Adrenal gland (tissue), 19 donors: ENCODE measurements at regions of chr9 and their contacts with region 1.

Region 1: DNA sequence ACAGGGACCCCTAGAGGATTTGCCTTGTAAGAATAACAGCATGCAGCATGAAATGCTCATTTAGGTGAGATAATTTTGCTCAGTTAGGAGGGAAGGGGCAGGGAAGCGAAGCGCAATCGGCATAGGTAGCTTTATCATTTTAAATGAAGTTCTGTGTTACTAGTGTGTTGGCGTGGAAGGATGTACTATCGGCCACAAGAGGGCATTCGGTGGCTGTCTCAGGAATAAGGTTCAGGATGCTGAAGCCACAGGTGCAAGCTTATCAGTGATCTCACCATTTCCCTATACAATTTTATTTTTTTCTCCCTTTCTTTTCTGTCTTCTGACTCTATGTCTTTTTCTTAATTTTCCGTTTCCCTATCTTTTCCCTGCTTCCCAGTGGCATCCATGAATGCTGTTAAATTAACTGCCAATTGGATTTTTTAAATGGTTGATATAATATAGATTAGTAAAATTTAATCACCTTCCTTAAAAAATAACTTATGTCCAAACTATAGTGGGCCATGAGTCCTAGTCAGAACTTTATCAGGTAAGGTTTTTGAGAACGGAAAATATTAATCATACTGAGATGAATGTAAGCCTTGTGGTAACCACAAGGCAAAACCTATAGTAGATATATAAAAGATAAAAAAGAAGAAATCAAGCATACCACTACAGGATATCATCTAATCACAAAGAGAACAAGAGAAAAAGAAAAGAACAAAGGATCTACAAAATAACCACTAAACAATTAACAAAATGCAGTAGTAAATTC is 1.2 kb upstream of the INSL6 start:
- DNase-seq: peak; percentile 26 to 75 (median 48)
- H3K4me3 ChIP-seq: no peak overlapping the region
- H3K27ac ChIP-seq: no peak overlapping the region
- H3K4me1 ChIP-seq: no peaks in the 10 kb centered on the region
- H3K27me3 ChIP-seq: no peaks in the 10 kb centered on the region
- CTCF ChIP-seq: peak; percentile 40 to 73 (median 66)
- POLR2A ChIP-seq: no peak

Region 2: DNA sequence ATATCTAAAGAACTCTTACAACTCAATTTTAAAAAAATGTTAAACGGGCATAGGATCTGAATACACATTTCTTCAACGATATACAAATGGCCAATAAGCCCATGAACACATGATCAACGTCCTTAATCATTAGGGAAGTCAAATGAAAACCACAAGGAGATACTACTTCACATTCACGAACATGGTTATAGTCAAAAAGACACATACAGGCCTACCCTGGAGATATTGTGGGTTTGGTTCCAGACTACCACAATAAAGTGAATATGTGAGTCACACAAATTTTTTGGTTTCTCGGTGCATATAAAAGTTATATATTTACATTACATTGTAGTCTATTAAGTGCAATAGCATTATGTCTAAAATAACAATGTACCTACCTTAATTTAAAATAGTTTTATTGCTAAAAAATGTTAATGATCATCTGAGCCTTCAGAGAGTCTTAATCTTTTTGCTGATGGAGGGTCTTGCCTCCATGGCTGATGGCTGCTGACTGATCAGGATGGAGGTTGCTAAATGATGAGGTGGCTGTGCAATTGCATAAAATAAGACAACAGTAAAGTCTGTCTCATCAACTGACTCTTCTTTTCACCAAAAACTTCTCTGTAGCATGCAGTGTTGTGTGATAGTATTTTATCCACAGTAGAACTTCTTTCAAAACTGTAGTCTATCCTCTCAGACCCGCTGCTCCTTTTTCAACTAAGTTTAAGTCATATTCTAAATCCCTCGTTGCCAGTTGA is 460.7 kb before region 1 on chr9:
- intact Hi-C with region 1: no loop called
- DNase-seq: no peak
- H3K4me3 ChIP-seq: no peak overlapping the region
- H3K27ac ChIP-seq: no peak overlapping the region
- H3K4me1 ChIP-seq: peaks cover 0 to 17% of the 10 kb centered on the region in 2 donors
- H3K27me3 ChIP-seq: no peaks in the 10 kb centered on the region
- CTCF ChIP-seq: no peak
- POLR2A ChIP-seq: no peak

Region 3: DNA sequence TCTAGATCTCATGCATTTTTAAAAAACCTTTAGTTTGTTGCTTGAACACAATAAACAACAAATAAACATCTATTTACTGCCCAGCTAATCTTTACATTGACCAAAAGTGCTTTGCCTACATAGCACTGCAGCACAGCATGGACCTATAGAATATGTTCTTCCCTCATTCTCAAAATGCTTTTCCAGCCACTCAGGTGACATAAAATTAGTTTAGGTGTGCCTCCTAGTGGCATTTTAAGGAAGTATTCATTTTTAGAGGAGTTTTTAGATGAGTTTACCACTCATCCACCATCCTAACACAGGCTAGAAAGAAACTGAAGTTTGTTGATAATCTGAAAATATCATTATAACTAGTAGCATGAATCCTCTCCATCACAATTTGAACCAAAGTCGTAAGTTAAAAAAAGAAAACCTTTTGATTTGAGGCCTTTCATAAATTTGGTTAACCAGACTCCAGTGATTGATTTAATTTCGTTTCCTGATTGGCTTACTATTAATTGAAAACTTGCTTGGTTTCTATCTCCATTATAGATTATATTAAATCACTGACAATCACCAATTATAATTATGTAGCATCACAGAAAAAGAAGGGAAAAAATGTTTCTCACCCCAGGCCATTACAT is 238.5 kb after region 1 on chr9:
- intact Hi-C with region 1: loop called in 1 of 2 experiments (anchors 5 kb)
- DNase-seq: no peak
- H3K4me3 ChIP-seq: no peak overlapping the region
- H3K27ac ChIP-seq: no peak overlapping the region
- H3K4me1 ChIP-seq: no peaks in the 10 kb centered on the region
- H3K27me3 ChIP-seq: no peaks in the 10 kb centered on the region
- CTCF ChIP-seq: peak in 3 of 6 experiments; percentile 21 to 39 (median 27)
- POLR2A ChIP-seq: no peak

Region 4: DNA sequence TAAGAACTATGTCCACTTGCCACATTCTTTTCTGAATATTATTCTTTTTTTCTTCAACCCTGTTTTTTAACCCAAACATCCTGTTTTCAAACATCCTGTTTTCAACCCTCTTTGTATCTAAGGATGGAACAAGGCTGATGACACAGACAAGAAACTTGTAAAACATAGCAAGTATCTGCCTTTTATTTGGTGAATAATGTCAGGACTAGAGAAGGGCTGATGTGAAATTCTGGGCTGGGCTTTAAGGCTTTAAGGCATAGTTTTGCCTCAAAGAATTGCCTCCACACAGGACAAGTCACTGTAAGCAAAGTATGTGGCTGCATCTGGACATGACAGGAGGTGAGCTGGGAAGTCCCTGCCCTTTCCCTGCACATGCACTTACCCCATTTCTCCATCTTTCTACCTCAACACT is 399.8 kb after region 1 on chr9:
- intact Hi-C with region 1: loop called (anchors 5 to 10 kb)
- DNase-seq: no peak
- H3K4me3 ChIP-seq: no peak overlapping the region
- H3K27ac ChIP-seq: peak overlapping the region in 1 of 5 donors; percentile 37
- H3K4me1 ChIP-seq: no peaks in the 10 kb centered on the region
- H3K27me3 ChIP-seq: no peaks in the 10 kb centered on the region
- CTCF ChIP-seq: no peak
- POLR2A ChIP-seq: no peak

Region 5: DNA sequence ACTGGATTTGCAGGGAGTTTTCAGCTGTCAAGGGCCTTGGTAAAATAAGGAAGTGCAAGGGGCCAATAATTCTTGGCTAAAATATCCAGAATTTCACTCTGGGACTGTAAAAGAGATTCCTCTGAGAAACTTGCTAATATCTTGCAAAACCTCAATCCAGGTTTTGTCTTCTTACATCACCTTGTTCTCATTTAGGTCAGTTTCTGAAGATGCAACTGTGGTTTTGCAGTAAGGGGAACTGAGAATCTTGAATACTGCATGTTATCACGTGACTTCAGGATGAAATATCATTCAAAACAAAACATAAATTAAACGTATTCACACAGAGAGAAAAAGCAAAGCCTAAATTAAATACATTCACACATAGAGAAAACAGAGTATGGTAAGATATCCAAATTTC is 407.3 kb after region 1 on chr9:
- intact Hi-C with region 1: loop called (anchors 5 to 10 kb)
- DNase-seq: no peak
- H3K4me3 ChIP-seq: no peak overlapping the region
- H3K27ac ChIP-seq: no peak overlapping the region
- H3K4me1 ChIP-seq: no peaks in the 10 kb centered on the region
- H3K27me3 ChIP-seq: no peaks in the 10 kb centered on the region
- CTCF ChIP-seq: no peak
- POLR2A ChIP-seq: no peak